Gastrocnemius medialis (tissue), 4 donors: ENCODE measurements at regions of chr7 and their contacts with region 1.

Region 1: DNA sequence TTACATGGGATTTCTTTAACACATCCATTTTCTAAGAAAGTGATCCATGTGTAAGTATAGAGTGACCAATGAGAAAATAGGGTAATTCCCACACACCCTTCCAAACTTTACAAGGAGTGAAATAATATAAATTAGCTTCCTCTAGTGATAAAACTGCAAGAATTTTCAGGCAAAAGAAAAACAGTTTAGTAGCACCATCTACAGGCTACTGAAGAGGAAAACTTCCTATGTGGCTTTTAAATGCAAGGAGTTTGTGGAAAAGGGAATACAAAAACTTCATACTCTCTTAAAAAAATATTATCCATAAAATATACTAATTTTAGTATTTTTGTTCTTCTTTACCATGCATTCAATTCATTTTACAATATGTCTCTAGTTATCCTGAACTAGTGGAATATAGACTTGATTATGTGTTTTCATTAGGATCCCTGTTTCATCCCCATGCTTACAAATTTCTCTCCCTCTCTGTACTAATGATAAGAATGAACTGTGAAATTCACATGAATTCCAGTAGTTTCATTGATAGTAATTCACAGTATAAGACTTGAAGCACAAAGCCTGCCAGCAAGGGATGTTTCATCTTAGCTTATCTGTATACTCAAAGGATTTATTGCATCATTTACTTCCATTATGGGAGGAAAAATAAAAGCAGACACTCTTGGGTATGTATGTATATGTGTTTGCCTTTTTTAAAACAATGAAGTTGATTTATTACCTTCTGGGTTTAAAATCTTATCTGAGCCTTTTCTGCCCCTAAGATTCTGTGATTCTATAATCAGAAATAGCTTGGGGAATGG is 442.9 kb downstream of the AUTS2 start:
- DNase-seq: no peak
- ATAC-seq: no peak
- H3K4me3 ChIP-seq: no peak overlapping the region
- H3K27ac ChIP-seq: no peak overlapping the region
- H3K4me1 ChIP-seq: peaks cover 0 to 8% of the 10 kb centered on the region in 2 donors
- H3K27me3 ChIP-seq: no peaks in the 10 kb centered on the region
- CTCF ChIP-seq: peak in 1 of 5 experiments; percentile 30
- POLR2A ChIP-seq: no peak

Region 2: GRCh38 chr7:68176974-68177373 is 1864.2 kb before region 1 on chr7:
- in situ Hi-C with region 1: no loop called
- intact Hi-C with region 1: loop called (anchors 10 kb)
- DNase-seq: peak; percentile 6 to 23
- ATAC-seq: peak; percentile 70 to 77
- H3K4me3 ChIP-seq: no peak overlapping the region
- H3K27ac ChIP-seq: no peak overlapping the region
- H3K4me1 ChIP-seq: no peaks in the 10 kb centered on the region
- H3K27me3 ChIP-seq: no peaks in the 10 kb centered on the region
- CTCF ChIP-seq: peak in 4 of 5 experiments; percentile 53 to 73 (median 66)
- POLR2A ChIP-seq: no peak

Region 3: GRCh38 chr7:70154521-70155180 is 113.5 kb after region 1 on chr7:
- in situ Hi-C with region 1: loop called in 2 of 4 experiments (anchors 10 kb)
- intact Hi-C with region 1: no loop called
- DNase-seq: no peak
- ATAC-seq: peak in 1 of 2 donors; percentile 49
- H3K4me3 ChIP-seq: no peak overlapping the region
- H3K27ac ChIP-seq: no peak overlapping the region
- H3K4me1 ChIP-seq: peaks cover 6 to 32% of the 10 kb centered on the region in 2 donors
- H3K27me3 ChIP-seq: no peaks in the 10 kb centered on the region
- CTCF ChIP-seq: no peak
- POLR2A ChIP-seq: no peak